Mammary epithelial cell (primary cell): ENCODE measurements at regions of chr10 and their contacts with region 1.

Region 1: DNA sequence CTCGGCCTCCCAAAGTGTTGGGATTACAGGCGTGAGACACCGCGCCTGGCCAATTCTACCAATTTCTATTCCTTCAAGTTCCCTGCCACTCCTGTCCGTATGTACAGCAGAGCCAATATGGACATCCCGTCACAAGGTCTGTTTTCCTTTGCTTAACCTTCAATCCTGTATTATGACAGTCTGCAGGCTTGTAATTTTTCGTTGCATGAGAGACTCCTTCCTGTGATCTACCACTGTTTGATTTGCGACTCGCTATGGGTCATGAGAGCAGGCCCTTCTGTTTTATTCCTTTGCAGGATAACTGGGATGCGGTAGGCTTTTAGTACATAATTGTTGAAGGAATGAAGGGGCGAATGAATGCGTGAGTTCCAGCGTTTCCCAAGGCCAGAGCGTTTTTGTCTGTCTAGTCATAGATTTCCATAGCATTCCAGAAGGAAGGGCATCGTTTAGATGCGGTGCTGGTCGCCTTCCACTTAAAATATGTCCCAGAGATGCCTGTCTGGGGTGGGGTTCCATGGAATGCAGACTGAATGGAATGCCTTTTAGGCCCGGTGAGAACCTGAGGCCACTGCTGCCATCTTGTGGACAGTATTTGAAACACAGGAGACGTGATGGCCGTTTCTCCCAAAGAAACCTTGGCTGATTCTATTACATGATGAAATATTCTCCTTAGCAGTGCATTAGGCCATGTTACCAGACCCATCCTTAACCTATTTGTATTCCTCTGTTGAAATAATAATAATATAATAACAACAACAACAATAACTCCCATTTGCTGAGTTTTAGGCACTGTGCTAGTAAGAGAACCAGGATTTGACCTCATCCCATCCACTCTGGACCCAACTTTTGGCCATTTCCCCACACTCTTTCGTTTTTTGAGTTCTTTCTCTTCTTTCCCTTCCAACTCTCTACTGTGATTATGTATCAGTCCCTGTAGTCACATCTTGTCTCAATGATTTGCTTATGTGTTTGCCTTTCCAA is 193.2 kb downstream of the MYOF start:
- DNase-seq: peak; percentile 70
- H3K4me3 ChIP-seq: no peak overlapping the region
- H3K27ac ChIP-seq: no peak overlapping the region
- H3K4me1 ChIP-seq: peaks cover 13% of the 10 kb centered on the region
- H3K27me3 ChIP-seq: no peaks in the 10 kb centered on the region
- CTCF ChIP-seq: peak; percentile 69 to 80

Region 2: DNA sequence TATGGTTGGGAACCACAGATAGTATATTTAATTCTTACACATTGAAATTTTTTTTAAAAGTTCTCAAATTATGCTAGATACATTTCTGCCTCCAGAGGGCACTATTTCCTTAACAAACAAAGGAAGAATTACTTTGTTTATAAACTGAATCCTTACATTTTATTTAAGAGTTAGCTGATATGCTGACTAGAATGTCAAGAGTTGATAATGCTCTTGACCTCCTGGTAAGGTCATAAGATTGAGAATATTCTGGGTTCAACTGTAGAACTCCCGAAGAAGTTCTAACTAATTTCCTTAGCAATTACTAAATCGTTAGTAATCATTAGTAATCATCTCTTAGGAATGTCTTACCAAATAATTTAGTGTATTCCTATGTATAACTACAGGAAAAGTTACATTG is 323.6 kb before region 1 on chr10:
- CTCF ChIA-PET with region 1: no interaction called
- dilution Hi-C with region 1: no loop called
- in situ Hi-C with region 1: no loop called
- intact Hi-C with region 1: no loop called
- DNase-seq: peak; percentile 28
- H3K4me3 ChIP-seq: peak overlapping the region in 2 of 3 experiments; percentile 9 to 36
- H3K27ac ChIP-seq: peak overlapping the region; percentile 45
- H3K4me1 ChIP-seq: peaks cover 5% of the 10 kb centered on the region
- H3K27me3 ChIP-seq: no peaks in the 10 kb centered on the region
- CTCF ChIP-seq: peak; percentile 59 to 62

Region 3: DNA sequence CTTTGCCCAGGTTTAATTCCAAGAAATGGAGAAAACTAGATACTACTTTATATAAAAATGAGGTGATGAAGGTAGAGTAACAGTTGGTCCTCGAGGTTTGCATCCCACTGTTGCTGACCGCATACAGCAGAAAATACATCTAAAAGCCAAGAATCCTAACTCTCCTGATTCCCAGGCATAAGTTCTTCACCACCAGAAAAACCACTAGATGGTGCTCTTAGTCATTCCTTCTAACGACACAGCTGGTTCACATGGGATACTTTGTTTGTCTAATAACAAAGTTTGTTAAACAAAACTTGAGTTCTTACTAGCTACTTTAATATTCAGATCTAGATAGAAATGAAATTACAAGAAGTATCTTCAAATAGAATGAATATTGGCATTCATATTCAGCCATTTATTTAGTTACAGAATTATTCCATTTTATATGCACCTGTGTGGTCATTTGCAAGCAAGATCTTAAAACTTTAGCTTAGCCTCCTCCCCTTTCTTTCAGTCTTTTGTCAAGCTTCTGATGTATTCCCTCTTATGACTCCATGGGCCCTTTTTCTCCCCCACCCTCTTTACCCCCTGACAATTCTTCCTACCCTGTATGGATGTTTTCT is 282.4 kb before region 1 on chr10:
- CTCF ChIA-PET with region 1: no interaction called
- dilution Hi-C with region 1: no loop called
- in situ Hi-C with region 1: no loop called
- intact Hi-C with region 1: loop called (anchors 2 kb)
- DNase-seq: peak; percentile 35
- H3K4me3 ChIP-seq: no peak overlapping the region
- H3K27ac ChIP-seq: no peak overlapping the region
- H3K4me1 ChIP-seq: no peaks in the 10 kb centered on the region
- H3K27me3 ChIP-seq: no peaks in the 10 kb centered on the region
- CTCF ChIP-seq: peak; percentile 72 to 74

Region 4: DNA sequence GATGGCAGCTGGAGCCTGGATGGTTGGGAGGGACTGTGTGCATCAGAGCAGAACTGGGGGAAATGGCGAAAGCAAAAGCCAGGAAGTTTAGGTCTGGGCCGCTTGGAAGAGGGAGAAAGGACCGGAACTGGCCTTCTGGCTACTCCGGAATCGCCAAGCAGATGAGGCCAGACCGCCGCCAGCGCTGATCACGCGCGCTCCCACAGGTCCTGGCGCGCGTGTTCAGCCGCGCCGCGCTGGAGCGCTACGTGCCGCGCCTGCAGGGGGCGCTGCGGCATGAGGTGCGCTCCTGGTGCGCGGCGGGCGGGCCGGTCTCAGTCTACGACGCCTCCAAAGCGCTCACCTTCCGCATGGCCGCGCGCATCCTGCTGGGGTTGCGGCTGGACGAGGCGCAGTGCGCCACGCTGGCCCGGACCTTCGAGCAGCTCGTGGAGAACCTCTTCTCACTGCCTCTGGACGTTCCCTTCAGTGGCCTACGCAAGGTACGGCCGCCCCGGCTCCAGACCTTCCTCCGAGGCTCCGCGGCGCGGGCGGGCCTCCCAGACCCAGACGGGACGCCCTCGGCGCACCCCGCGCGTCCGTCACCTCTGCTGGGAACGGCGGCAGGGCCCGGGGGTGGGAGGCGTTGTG is 226.3 kb before region 1 on chr10:
- CTCF ChIA-PET with region 1: no interaction called
- dilution Hi-C with region 1: loop called (anchors 10 kb)
- in situ Hi-C with region 1: no loop called
- intact Hi-C with region 1: no loop called
- DNase-seq: peak; percentile 48
- H3K4me3 ChIP-seq: peak overlapping the region in 2 of 3 experiments; percentile 33 to 34
- H3K27ac ChIP-seq: no peak overlapping the region
- H3K4me1 ChIP-seq: peaks cover 16% of the 10 kb centered on the region
- H3K27me3 ChIP-seq: peaks cover 40% of the 10 kb centered on the region
- CTCF ChIP-seq: peak; percentile 30 to 52

Region 5: DNA sequence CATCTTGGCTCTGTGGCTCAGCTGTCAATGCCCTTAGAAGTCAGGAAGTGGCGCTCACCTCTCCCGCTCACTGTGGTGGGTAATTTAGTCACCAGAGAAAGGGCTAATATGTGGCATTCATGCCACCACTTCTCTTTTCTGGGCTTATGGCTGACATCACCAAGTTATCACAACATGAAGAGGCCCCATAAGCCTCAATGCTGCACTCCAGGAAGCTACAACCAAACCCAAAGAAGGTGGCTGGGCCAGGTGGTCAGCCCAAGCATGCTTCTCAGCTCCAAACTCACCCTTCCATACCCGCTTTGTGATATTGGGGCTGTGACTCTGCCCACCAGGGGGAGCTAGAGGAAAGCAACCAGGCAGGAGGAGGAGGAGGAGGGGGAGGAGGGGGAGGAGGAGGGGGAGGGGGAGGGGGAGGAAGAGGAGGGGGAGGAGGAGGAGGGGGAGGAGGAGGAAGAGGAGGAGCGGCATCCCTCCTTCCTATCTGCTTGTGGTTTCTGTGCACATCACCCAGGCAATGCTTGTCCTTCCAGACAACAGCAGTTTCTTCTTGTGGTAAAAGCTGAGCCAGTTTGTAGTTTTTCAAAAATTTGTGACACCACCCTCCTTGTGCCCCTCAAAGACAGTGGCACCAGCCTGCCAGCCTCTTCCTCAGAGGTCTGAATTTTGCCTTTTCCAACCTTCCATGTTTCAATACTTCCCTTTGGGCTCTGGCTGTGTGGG is 173.1 kb before region 1 on chr10:
- CTCF ChIA-PET with region 1: no interaction called
- dilution Hi-C with region 1: no loop called
- in situ Hi-C with region 1: no loop called
- intact Hi-C with region 1: loop called (anchors 1 kb)
- DNase-seq: peak; percentile 20
- H3K4me3 ChIP-seq: no peak overlapping the region
- H3K27ac ChIP-seq: no peak overlapping the region
- H3K4me1 ChIP-seq: no peaks in the 10 kb centered on the region
- H3K27me3 ChIP-seq: no peaks in the 10 kb centered on the region
- CTCF ChIP-seq: peak; percentile 41 to 59

Region 6: DNA sequence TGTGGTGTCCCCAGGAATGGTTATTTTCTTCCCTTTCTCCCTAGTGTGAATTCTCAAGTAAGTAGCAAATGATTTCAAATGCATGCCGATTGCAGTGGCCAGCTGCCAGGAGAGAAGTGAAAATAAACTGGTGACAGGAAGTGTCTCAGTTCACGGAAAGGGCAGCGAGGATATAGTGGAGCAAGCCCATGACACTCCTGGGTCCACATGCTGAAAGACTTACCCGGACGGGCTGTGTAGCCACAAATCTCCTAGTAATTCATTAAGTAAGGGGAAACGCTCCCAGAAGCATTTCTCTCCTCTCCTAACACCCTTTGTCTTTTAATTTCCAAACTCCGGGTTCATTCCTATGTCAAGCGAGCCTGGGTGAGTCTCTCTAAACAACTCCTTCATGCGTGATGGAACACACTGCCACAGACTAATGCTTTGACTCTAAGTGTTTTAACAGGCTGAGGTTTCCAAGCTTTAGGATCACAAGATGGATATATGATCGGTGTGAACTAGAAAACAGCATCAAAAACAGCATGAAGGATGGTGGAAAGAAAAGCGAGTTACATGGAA is 89.7 kb before region 1 on chr10:
- CTCF ChIA-PET with region 1: no interaction called
- dilution Hi-C with region 1: loop called (anchors 5 kb)
- in situ Hi-C with region 1: no loop called
- intact Hi-C with region 1: no loop called
- DNase-seq: peak; percentile 6
- H3K4me3 ChIP-seq: no peak overlapping the region
- H3K27ac ChIP-seq: no peak overlapping the region
- H3K4me1 ChIP-seq: peaks cover 9% of the 10 kb centered on the region
- H3K27me3 ChIP-seq: no peaks in the 10 kb centered on the region
- CTCF ChIP-seq: no peak

Region 7: GRCh38 chr10:93224005-93224779 is 64.8 kb before region 1 on chr10:
- CTCF ChIA-PET with region 1: interaction called, 12 read pairs
- dilution Hi-C with region 1: no loop called
- in situ Hi-C with region 1: no loop called
- intact Hi-C with region 1: no loop called
- DNase-seq: no peak
- H3K4me3 ChIP-seq: no peak overlapping the region
- H3K27ac ChIP-seq: no peak overlapping the region
- H3K4me1 ChIP-seq: no peaks in the 10 kb centered on the region
- H3K27me3 ChIP-seq: no peaks in the 10 kb centered on the region
- CTCF ChIP-seq: peak; percentile 19 to 51

Region 8: GRCh38 chr10:93235686-93236085 is 53.3 kb before region 1 on chr10:
- CTCF ChIA-PET with region 1: no interaction called
- dilution Hi-C with region 1: no loop called
- in situ Hi-C with region 1: no loop called
- intact Hi-C with region 1: no loop called
- DNase-seq: no peak
- H3K4me3 ChIP-seq: no peak overlapping the region
- H3K27ac ChIP-seq: no peak overlapping the region
- H3K4me1 ChIP-seq: no peaks in the 10 kb centered on the region
- H3K27me3 ChIP-seq: no peaks in the 10 kb centered on the region
- CTCF ChIP-seq: no peak

Region 9: DNA sequence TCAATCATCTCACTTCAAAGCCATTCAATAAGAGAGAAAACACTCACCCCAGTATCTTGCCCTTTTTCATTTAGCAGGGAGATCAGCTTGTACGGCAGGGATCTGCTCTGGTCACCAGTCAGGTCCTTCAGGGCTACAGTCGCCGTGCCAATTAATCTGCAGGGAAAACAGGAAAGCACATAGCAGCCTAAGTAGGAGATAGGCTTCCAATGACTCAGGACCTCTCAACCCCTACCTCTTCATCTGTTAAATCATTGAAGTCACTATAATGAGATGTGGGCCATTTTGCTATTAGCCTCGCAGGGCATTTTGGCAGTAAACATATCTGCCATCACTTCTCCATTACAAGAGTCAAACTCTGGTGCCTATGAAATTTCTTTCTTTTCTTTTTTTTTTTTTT is 142.4 kb after region 1 on chr10:
- CTCF ChIA-PET with region 1: no interaction called
- dilution Hi-C with region 1: no loop called
- in situ Hi-C with region 1: no loop called
- intact Hi-C with region 1: no loop called
- DNase-seq: no peak
- H3K4me3 ChIP-seq: no peak overlapping the region
- H3K27ac ChIP-seq: no peak overlapping the region
- H3K4me1 ChIP-seq: peaks cover 17% of the 10 kb centered on the region
- H3K27me3 ChIP-seq: no peaks in the 10 kb centered on the region
- CTCF ChIP-seq: no peak

Region 10: DNA sequence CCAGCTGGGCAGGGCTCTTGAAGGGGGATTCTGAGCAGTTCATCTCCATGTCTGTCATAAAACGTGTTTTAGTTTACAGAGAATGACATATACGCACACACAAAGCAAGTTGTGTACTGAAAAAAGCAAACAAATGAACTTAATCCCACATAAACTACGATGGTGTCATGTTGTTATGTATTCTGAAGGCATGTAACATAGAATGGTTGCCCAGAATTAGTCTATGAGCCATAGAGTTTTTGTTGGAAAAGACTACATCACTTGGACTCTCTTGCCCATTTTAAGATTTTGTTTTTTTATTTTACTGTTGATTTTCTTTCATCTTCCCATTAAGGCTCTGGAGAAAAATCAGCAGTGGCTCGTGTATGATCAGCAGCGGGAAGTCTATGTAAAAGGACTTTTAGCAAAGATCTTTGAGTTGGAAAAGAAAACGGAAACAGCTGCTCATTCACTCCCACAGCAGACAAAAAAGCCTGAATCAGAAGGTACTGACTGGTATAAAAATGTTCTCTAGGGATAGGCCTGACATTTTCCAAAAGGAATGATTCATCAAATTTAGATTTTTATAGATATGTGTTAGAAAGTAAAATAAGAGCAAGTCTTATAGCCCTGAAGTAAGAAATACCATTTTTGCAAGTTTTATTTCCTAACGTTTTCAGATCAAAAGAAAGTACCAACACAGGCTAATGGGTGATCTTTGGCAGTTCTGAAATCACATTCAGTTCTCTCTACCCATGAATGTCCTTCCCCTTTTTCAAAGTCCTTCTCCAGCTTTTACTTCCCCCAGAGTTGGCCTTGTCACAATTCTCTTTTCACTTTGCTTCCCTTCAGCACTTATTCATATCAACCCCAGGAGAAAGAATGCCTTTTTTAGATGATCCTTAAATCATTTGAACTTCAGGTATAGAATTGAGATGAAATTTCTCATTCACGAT is 226.4 kb after region 1 on chr10:
- CTCF ChIA-PET with region 1: no interaction called
- dilution Hi-C with region 1: no loop called
- in situ Hi-C with region 1: no loop called
- intact Hi-C with region 1: loop called (anchors 1 kb)
- DNase-seq: no peak
- H3K4me3 ChIP-seq: no peak overlapping the region
- H3K27ac ChIP-seq: no peak overlapping the region
- H3K4me1 ChIP-seq: no peaks in the 10 kb centered on the region
- H3K27me3 ChIP-seq: no peaks in the 10 kb centered on the region
- CTCF ChIP-seq: no peak

Region 11: DNA sequence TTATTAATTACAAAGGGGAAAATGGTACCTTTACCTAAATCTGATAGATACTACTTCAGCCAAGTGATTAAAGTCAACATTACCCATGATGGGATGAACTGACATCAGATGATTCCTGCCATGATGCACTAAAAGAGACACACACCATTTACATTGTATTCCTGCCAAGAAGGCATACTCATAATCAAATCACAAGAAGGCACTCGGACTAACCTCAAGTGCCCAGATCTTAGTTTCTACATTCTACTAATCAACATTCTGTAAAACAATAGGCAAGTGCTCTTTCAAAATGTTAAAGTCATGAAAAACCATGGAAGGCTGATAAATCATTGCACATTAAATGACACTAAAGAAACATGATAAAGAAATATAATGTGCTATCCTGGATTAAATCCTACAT is 649.2 kb after region 1 on chr10:
- CTCF ChIA-PET with region 1: no interaction called
- dilution Hi-C with region 1: no loop called
- in situ Hi-C with region 1: no loop called
- intact Hi-C with region 1: no loop called
- DNase-seq: no peak
- H3K4me3 ChIP-seq: no peak overlapping the region
- H3K27ac ChIP-seq: no peak overlapping the region
- H3K4me1 ChIP-seq: no peaks in the 10 kb centered on the region
- H3K27me3 ChIP-seq: no peaks in the 10 kb centered on the region
- CTCF ChIP-seq: no peak